ENCODE measurements at regions of chr21 and their contacts with region 1.

Region 1: DNA sequence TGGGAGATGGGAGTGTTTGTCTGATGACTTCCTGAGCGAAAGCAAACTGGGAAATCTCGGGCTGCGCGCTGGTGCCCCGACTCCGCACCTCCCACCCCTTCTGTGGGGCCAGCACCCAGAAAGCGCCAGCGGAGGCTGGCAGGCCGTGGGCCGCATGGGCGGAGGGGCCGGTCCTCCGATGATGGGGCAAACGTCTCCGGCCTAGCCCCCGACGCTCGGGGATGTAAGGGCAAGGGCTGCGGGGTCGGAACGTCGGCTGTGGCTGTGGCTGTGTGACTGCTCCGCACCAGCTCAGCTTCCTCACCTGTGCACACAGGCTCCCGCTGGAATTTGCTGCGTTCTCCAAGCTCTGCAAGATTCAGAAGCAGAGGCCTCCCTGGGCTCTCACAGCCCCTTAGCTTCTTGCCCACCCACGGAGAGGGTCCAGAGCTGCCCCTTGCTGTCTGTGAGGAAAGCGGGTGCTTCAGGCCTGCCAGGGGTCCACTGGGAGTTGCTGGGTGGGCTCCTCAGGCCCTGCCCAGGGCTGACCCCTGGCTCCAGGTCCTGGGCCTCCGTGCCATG is 35.0 kb downstream of the COL18A1 start:
- DNase-seq: no peak
- ATAC-seq: no peak
- H3K4me3 ChIP-seq: no peak overlapping the region
- H3K27ac ChIP-seq: no peak overlapping the region
- H3K4me1 ChIP-seq: peaks cover 10% of the 10 kb centered on the region
- H3K27me3 ChIP-seq: no peaks in the 10 kb centered on the region
- CTCF ChIP-seq: no peak

Region 2: GRCh38 chr21:45292399-45293219 is 147.4 kb before region 1 on chr21:
- intact Hi-C with region 1: loop called (anchors 2 kb)
- DNase-seq: peak; percentile 91
- ATAC-seq: peak; percentile 84
- H3K4me3 ChIP-seq: no peak overlapping the region
- H3K27ac ChIP-seq: peak overlapping the region; percentile 94
- H3K4me1 ChIP-seq: peaks cover 42% of the 10 kb centered on the region
- H3K27me3 ChIP-seq: no peaks in the 10 kb centered on the region
- CTCF ChIP-seq: peak; percentile 98

Measured in upper lobe of right lung (tissue), 1 donor.